ENCODE measurements at regions of chr13 and their contacts with region 1.

Region 1: DNA sequence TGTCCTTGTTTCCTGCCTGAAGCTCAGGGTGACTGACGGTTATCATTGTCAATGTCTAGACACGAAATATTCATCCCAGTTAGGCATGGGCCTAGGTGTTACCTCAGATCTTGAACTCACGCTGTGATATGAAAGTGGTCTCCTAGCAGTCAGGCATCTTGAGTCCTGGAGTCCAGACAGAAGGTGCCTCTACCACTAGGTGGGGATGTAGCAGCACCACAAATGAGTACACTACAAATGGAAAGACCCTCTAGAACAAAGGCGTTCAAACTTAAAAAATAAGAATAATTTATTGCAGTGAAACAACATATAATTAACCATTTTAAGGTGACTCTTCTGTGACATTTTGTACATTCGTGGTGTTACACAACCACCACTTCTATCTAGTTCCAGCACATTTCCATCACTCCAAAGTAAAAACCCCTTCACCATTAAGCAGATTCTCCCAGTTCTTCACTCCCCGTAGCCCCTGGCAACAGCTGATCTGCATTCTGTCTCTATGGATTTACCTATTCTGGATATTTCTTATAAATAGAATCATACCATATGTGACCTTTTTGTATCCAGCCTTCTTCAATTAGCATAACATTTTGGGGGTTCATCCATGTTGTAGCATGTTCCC is 11.9 kb upstream of the FRY start:
- DNase-seq: peak; percentile 58
- H3K4me3 ChIP-seq: no peak overlapping the region
- H3K27ac ChIP-seq: no peak overlapping the region
- H3K4me1 ChIP-seq: peaks cover 4% of the 10 kb centered on the region
- H3K27me3 ChIP-seq: no peaks in the 10 kb centered on the region

Region 2: GRCh38 chr13:30880856-30881155 is 1138.9 kb before region 1 on chr13:
- in situ Hi-C with region 1: no loop called
- DNase-seq: peak; percentile 95
- H3K4me3 ChIP-seq: peak overlapping the region; percentile 41
- H3K27ac ChIP-seq: peak overlapping the region; percentile 97
- H3K4me1 ChIP-seq: peaks cover 42% of the 10 kb centered on the region
- H3K27me3 ChIP-seq: no peaks in the 10 kb centered on the region

Region 3: GRCh38 chr13:31605076-31605858 is 414.5 kb before region 1 on chr13:
- in situ Hi-C with region 1: no loop called
- DNase-seq: no peak
- H3K4me3 ChIP-seq: no peak overlapping the region
- H3K27ac ChIP-seq: no peak overlapping the region
- H3K4me1 ChIP-seq: no peaks in the 10 kb centered on the region
- H3K27me3 ChIP-seq: no peaks in the 10 kb centered on the region

Region 4: DNA sequence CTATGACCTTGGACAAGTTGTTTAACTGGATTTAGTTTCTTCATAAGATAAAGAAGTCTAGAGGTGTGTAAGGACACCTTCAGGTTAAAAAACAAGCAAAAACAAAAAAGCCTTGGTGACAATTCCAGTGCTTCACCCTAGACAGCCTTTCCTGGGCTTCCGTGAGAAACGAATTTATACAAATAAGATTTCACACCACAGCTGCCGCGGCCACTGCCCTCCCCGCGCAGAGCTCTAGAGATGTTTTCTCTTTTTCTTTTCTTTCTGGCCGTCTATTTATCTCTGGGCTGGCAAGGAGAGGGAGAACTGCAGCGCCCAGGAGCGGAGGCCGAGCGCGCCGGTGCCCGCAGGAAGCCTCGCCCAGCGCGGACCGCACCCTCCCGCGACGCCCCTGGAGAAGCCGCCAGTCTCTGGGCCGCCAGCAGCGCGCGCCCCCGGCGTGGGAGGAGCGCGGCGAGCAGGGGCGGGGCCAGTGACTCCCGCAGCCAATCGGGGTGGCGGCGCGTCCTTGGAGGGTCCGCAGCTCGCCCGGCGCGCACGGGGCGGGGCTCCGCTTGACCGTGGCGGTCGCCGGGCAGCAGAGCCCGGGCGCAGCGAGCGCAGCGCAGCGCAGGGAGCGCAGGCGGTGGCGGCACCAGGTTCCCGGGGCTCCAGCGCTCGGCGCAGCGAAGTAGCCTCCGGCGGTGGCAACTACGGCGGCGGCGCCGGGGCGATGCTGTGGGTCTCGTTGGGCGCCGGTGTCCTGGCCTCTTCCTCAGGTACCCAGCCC is 173.4 kb before region 1 on chr13:
- in situ Hi-C with region 1: no loop called
- DNase-seq: peak; percentile 94
- H3K4me3 ChIP-seq: peak overlapping the region; percentile 75
- H3K27ac ChIP-seq: peak overlapping the region; percentile 12
- H3K4me1 ChIP-seq: no peaks in the 10 kb centered on the region
- H3K27me3 ChIP-seq: 0 out of 2 replicates have a peak, but pooled peaks cover 7% of the 10 kb centered on the region

Region 5: GRCh38 chr13:32309312-32310133 is 289.8 kb after region 1 on chr13:
- in situ Hi-C with region 1: loop called (anchors 10 kb)
- DNase-seq: peak; percentile 57
- H3K4me3 ChIP-seq: peak overlapping the region; percentile 49
- H3K27ac ChIP-seq: peak overlapping the region; percentile 17; the same call in 1 of the 2 replicates
- H3K4me1 ChIP-seq: peaks cover 5% of the 10 kb centered on the region; the same call in 1 of the 2 replicates
- H3K27me3 ChIP-seq: no peaks in the 10 kb centered on the region

Region 6: GRCh38 chr13:32600890-32601289 is 581.2 kb after region 1 on chr13:
- in situ Hi-C with region 1: no loop called
- DNase-seq: no peak
- H3K4me3 ChIP-seq: no peak overlapping the region
- H3K27ac ChIP-seq: no peak overlapping the region
- H3K4me1 ChIP-seq: no peaks in the 10 kb centered on the region
- H3K27me3 ChIP-seq: no peaks in the 10 kb centered on the region

Measured in GM23248 (cell line).